OCI-LY7 (cell line): ENCODE measurements at regions of chr1 and their contacts with region 1.

Region 1: DNA sequence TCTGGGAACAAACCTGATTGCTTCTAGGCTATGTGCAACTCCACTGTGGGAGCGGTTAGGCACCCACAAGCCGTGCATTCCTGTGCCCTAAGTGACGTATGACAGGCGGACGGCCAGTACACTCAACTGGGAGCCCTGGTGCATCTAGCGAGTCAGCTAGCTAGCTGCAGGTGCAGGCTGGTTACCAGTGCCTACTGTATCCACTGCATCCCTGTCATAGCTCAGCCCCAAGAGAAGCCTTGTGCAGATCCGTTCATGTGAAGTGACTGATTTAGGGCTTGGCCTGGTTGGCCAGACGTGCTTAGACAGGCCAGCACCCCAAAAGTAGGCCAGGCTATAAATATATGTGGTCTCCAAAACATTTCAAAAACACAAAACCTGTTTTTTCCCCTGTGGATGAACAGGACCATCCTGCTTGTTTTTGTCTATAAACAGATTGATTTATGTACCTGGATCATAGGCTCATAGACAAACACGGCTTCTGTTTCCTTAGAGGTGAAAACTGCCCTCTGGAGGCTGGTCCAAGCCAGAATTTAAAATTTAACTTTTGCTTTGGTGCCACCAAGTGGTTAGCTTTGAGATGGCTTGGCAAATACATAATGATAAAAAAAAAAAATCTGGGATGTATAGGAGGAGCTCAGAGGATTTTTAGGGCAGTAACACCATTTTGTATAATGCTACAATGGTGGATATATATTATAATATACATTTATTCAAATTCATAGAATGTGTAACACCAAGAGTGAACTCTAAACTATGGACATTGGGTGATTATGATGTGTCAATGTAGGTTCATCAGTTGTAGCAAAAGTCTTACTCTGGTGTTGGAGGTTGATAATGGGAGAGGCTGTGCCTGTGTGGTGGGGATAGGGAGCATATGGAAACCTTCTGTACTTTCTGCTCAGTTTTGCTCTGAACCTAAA is 68.5 kb downstream of the GIPC2 start:
- DNase-seq: peak; percentile 81
- H3K4me3 ChIP-seq: no peak overlapping the region
- H3K27ac ChIP-seq: no peak overlapping the region
- H3K4me1 ChIP-seq: no peaks in the 10 kb centered on the region
- CTCF ChIP-seq: peak; percentile 100

Region 2: DNA sequence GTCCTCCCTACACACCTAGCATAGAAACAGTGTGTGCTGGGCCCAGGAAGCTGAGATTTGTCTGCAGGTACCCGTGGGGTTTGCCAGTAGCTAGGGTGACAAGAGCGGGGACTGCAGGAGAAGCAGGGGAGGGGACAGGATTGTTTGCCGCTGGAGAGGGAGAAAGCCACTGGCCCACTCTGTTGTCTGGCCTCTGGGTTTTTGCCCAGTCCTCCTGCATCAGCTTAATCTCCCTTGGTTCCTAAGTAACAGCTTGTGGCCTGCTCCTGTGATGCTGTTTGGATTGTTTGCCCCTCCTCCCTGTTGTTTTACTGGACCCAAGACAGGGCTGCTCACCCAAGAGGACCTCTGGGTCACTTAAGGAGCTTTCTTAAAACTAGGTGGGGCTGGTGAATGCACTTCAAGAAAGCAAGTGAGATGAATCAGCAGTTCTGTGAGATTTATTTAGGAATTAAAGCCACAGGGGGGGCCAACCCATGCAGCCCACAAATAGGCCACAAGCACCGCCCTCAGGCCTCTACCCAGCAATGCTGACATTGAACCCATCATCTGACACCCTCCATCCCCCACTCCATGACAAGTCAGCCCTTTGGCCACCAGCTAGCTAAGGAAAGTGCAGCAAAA is 574.7 kb before region 1 on chr1:
- CTCF ChIA-PET with region 1: no interaction called
- POLR2A ChIA-PET with region 1: no interaction called
- intact Hi-C with region 1: loop called (anchors 10 kb)
- DNase-seq: no peak
- H3K4me3 ChIP-seq: no peak overlapping the region
- H3K27ac ChIP-seq: no peak overlapping the region
- H3K4me1 ChIP-seq: peaks cover 13% of the 10 kb centered on the region
- CTCF ChIP-seq: no peak

Region 3: DNA sequence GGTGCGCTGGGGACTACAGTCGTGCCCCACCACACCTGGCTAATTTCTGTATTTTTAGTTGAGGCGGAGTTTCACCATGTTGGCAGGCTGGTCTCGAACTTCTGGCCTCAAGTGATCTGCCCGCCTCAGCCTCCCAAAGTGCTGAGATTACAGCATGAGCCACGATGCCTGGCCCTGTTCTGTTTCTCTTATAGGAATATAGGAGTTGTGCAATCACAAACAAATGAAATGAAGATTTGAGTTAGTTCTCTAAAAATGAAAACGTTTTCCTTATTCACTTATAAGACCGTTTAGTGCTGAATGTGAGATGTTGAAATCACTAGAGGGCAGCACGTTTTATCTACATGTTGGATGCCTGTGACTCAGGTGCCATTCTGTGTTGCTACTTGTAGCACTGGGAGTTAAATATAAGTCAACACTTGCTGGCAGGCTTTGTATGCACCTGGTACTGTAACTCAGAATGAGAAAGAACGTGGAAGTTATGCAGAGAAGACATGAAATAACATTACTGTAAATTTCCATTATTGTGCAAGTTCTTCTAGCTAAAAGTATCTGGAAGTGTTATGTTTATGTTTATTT is 289.1 kb before region 1 on chr1:
- CTCF ChIA-PET with region 1: no interaction called
- POLR2A ChIA-PET with region 1: no interaction called
- intact Hi-C with region 1: loop called (anchors 1 kb)
- DNase-seq: peak; percentile 88
- H3K4me3 ChIP-seq: no peak overlapping the region
- H3K27ac ChIP-seq: peak overlapping the region; percentile 70
- H3K4me1 ChIP-seq: peaks cover 38% of the 10 kb centered on the region
- CTCF ChIP-seq: peak; percentile 84

Region 4: GRCh38 chr1:77926561-77927357 is 187.5 kb before region 1 on chr1:
- CTCF ChIA-PET with region 1: no interaction called
- POLR2A ChIA-PET with region 1: no interaction called
- intact Hi-C with region 1: loop called (anchors 5 kb)
- DNase-seq: no peak
- H3K4me3 ChIP-seq: peak overlapping the region; percentile 37
- H3K27ac ChIP-seq: no peak overlapping the region
- H3K4me1 ChIP-seq: peaks cover 5% of the 10 kb centered on the region
- CTCF ChIP-seq: no peak